PC-9 (cell line): ENCODE measurements at regions of chr18 and their contacts with region 1.

Region 1: DNA sequence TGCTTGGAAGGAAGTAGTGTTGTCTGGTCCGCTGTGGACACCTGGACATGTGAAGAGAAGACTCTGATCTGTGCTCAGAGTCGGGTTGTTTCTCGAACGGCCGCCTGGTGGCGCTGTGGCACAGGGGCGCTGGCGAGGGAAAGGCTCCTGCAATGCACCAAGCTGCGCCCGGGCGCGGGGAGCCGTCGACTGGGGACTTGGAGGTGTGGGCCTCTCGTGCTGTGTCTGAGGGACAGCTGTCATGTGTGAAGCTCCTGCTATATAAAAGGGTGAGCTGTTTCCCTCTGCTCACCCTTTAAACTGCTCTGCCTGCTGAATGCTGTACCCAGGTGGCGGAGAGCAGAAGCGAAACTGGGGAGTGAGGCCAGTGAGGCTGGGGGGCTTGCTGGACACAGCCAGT is 44.0 kb downstream of the GNAL start:
- DNase-seq: peak; percentile 51 to 80
- H3K4me3 ChIP-seq: peak overlapping the region; percentile 25; the same call in 1 of the 2 replicates
- H3K27ac ChIP-seq: no peak overlapping the region
- H3K4me1 ChIP-seq: no peaks in the 10 kb centered on the region
- H3K27me3 ChIP-seq: peaks cover 17% of the 10 kb centered on the region; the same call in 1 of the 2 replicates
- CTCF ChIP-seq: peak; percentile 92

Region 2: GRCh38 chr18:10525371-10526210 is 1207.4 kb before region 1 on chr18 and contains the start of gene NAPG:
- CTCF ChIA-PET with region 1: no interaction called
- POLR2A ChIA-PET with region 1: no interaction called
- intact Hi-C with region 1: loop called (anchors 5 kb)
- DNase-seq: peak; percentile 83 to 93
- H3K4me3 ChIP-seq: peak within 1 kb of the TSS; percentile 98
- H3K27ac ChIP-seq: peak within 1 kb of the TSS; percentile 76
- H3K4me1 ChIP-seq: peaks cover 27% of the 10 kb centered on the region
- H3K27me3 ChIP-seq: no peaks in the 10 kb centered on the region
- CTCF ChIP-seq: no peak
- total RNA-seq, gene NAPG: 28.1 and 31.0 TPM in 2 replicates

Region 3: DNA sequence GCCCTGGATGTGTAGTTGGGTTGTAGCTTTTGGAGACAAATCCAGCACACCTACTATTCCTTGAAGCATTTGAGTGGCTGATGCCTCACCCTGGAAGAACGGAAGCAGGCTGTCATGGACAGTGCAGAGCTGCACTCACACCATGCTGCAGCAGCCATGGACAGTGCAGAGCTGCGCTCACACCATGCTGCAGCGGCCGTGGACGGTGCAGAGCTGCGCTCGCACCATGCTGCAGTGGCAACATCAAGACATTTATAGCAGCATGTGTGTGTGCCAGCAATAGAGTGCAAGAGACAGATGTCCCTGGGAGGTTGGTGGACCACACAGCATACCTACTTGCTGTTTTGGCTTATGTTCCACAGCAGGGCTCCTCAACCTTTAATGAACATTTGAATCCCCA is 13.4 kb before region 1 on chr18:
- CTCF ChIA-PET with region 1: no interaction called
- POLR2A ChIA-PET with region 1: no interaction called
- intact Hi-C with region 1: no loop called
- DNase-seq: no peak
- H3K4me3 ChIP-seq: no peak overlapping the region
- H3K27ac ChIP-seq: no peak overlapping the region
- H3K4me1 ChIP-seq: no peaks in the 10 kb centered on the region
- H3K27me3 ChIP-seq: peaks cover 28% of the 10 kb centered on the region; the same call in 1 of the 2 replicates
- CTCF ChIP-seq: no peak

Region 4: GRCh38 chr18:11775436-11776174 is 42.6 kb after region 1 on chr18:
- CTCF ChIA-PET with region 1: interaction called, 12 read pairs
- POLR2A ChIA-PET with region 1: no interaction called
- intact Hi-C with region 1: no loop called
- DNase-seq: no peak
- H3K4me3 ChIP-seq: no peak overlapping the region
- H3K27ac ChIP-seq: no peak overlapping the region
- H3K4me1 ChIP-seq: no peaks in the 10 kb centered on the region
- H3K27me3 ChIP-seq: no peaks in the 10 kb centered on the region
- CTCF ChIP-seq: no peak

Region 5: GRCh38 chr18:11859903-11860407 is 126.9 kb after region 1 on chr18:
- CTCF ChIA-PET with region 1: no interaction called
- POLR2A ChIA-PET with region 1: no interaction called
- intact Hi-C with region 1: no loop called
- DNase-seq: peak; percentile 89 to 97
- H3K4me3 ChIP-seq: peak overlapping the region; percentile 20; the same call in 1 of the 2 replicates
- H3K27ac ChIP-seq: peak overlapping the region; percentile 97
- H3K4me1 ChIP-seq: peaks cover 44% of the 10 kb centered on the region
- H3K27me3 ChIP-seq: no peaks in the 10 kb centered on the region
- CTCF ChIP-seq: peak; percentile 57; the same call in 1 of the 2 replicates

Region 6: DNA sequence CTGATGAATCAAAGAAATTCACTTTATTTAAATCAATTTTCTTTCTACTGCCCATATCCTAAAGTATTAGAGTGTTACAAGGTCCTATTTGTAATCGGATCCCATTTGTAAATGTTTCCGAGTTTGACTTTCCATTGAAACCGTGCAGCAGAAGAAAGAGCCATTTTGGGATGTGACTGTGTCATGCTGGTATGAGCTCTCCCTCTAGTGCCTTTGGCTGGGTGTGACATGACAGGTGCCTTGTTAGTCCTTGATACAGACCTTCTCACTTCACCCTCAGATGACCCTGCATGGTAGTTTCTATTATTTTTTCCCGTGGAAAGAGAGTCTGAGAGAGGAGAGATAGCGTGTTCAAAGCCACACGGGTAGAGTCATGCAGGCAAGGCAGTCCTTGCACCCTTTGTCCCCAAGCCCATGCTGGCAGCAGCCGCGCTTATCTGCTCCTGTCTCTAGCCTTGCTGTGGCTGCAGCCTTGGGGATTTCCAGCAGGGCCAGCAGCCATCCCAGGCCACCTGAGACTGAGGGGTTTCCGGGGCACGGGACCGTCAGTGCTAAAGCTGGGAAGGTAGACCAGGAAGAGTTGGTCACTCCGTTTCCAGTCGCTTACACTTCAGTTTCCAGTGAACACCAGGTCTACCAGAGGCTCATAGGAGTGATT is 139.6 kb after region 1 on chr18:
- CTCF ChIA-PET with region 1: interaction called, 4 read pairs
- POLR2A ChIA-PET with region 1: no interaction called
- intact Hi-C with region 1: loop called (anchors 1 kb)
- DNase-seq: peak in 1 of 2 experiments; percentile 41
- H3K4me3 ChIP-seq: no peak overlapping the region
- H3K27ac ChIP-seq: no peak overlapping the region
- H3K4me1 ChIP-seq: no peaks in the 10 kb centered on the region
- H3K27me3 ChIP-seq: no peaks in the 10 kb centered on the region
- CTCF ChIP-seq: peak; percentile 75

Region 7: DNA sequence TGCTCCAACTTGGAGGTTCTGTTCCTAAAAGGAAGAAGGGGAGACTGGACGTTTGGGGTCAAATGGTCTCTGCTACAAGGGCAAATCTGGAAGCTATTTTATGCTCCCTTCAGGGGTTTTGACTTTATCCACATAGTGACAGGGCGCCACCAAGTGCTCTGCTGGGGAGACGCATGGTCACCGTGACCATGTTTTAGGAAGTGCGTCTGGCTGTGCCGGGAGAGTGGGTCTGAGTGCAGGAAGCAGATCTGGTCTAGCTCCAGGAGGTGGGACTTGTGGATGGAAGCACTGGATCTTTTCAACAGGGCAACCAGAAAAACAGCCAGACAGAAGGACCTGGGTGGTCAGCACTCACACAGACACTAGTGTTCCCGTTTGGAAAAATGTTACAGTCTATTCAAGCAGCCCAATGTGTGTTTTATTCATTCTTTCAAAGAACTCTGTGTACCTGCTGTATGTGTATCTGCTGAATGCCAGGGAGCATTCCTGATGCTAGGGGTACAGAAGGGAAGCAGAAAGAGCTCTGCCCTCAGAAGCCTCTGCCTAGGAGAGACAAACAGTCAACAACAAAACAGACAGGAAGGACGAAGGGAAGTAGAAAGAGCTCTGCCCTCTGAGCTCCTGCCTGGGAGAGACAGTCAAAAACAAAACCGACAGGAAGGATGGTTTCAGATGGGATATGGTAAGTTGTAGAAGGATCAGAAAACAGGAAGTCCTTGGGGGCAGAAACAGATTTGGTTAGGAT is 262.6 kb after region 1 on chr18:
- CTCF ChIA-PET with region 1: interaction called, 21 read pairs
- POLR2A ChIA-PET with region 1: no interaction called
- intact Hi-C with region 1: loop called (anchors 1 kb)
- DNase-seq: peak; percentile 49 to 70
- H3K4me3 ChIP-seq: no peak overlapping the region
- H3K27ac ChIP-seq: no peak overlapping the region
- H3K4me1 ChIP-seq: peaks cover 17% of the 10 kb centered on the region
- H3K27me3 ChIP-seq: no peaks in the 10 kb centered on the region
- CTCF ChIP-seq: peak; percentile 84